Activated CD4-positive, alpha-beta T cell treated with anti-CD3 and anti-CD28 coated beads for 36 hours (primary cell): ENCODE measurements at regions of chr17 and their contacts with region 1.

Region 1: GRCh38 chr17:56478836-56479447 is 114.6 kb upstream of the NOG start:
- DNase-seq: peak; percentile 37
- ATAC-seq: peak; percentile 26
- H3K4me3 Mint-ChIP-seq: no peak overlapping the region
- H3K27ac Mint-ChIP-seq: no peak overlapping the region
- H3K4me1 Mint-ChIP-seq: peaks cover 7% of the 10 kb centered on the region
- H3K27me3 Mint-ChIP-seq: peaks cover 2% of the 10 kb centered on the region

Region 2: DNA sequence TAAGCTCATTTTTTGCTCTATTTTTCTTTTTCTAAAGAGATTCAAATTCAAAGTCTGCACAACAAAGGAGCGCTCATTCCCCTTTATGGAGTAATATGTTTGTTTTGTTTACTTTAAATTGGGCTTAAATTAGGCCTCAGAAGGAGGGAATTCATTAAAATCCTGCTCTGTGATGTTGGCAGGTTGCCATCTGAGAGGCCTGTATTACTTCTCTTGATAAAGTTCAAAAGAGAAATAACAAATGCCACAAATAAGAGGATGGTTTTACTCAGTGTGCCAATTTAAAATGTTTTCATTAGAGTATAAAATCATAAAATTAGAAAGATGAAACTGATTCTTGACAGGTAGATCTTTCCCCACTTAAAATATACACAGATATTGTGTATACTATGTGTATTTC is 1268.7 kb before region 1 on chr17:
- CTCF ChIA-PET with region 1: no interaction called
- POLR2A ChIA-PET with region 1: no interaction called
- intact Hi-C with region 1: no loop called
- DNase-seq: no peak
- ATAC-seq: no peak
- H3K4me3 Mint-ChIP-seq: no peak overlapping the region
- H3K27ac Mint-ChIP-seq: no peak overlapping the region
- H3K4me1 Mint-ChIP-seq: no peaks in the 10 kb centered on the region
- H3K27me3 Mint-ChIP-seq: peaks cover 3% of the 10 kb centered on the region

Region 3: GRCh38 chr17:55845385-55845784 is 633.6 kb before region 1 on chr17:
- CTCF ChIA-PET with region 1: no interaction called
- POLR2A ChIA-PET with region 1: no interaction called
- intact Hi-C with region 1: loop called (anchors 2 to 10 kb)
- DNase-seq: peak; percentile 55
- ATAC-seq: peak; percentile 53
- H3K4me3 Mint-ChIP-seq: no peak overlapping the region
- H3K27ac Mint-ChIP-seq: no peak overlapping the region
- H3K4me1 Mint-ChIP-seq: peaks cover 3% of the 10 kb centered on the region
- H3K27me3 Mint-ChIP-seq: peaks cover 7% of the 10 kb centered on the region

Region 4: GRCh38 chr17:56125830-56126819 is 352.8 kb before region 1 on chr17:
- CTCF ChIA-PET with region 1: interaction called, 5 read pairs
- POLR2A ChIA-PET with region 1: no interaction called
- intact Hi-C with region 1: loop called (anchors 5 kb)
- DNase-seq: peak; percentile 13
- ATAC-seq: no peak
- H3K4me3 Mint-ChIP-seq: no peak overlapping the region
- H3K27ac Mint-ChIP-seq: no peak overlapping the region
- H3K4me1 Mint-ChIP-seq: no peaks in the 10 kb centered on the region
- H3K27me3 Mint-ChIP-seq: no peaks in the 10 kb centered on the region

Region 5: GRCh38 chr17:56431736-56432135 is 47.2 kb before region 1 on chr17:
- CTCF ChIA-PET with region 1: no interaction called
- POLR2A ChIA-PET with region 1: no interaction called
- intact Hi-C with region 1: no loop called
- DNase-seq: no peak
- ATAC-seq: no peak
- H3K4me3 Mint-ChIP-seq: no peak overlapping the region
- H3K27ac Mint-ChIP-seq: no peak overlapping the region
- H3K4me1 Mint-ChIP-seq: no peaks in the 10 kb centered on the region
- H3K27me3 Mint-ChIP-seq: peaks cover 10% of the 10 kb centered on the region